PC-3 (cell line): ENCODE measurements at regions of chr3 and their contacts with region 1.

Region 1: DNA sequence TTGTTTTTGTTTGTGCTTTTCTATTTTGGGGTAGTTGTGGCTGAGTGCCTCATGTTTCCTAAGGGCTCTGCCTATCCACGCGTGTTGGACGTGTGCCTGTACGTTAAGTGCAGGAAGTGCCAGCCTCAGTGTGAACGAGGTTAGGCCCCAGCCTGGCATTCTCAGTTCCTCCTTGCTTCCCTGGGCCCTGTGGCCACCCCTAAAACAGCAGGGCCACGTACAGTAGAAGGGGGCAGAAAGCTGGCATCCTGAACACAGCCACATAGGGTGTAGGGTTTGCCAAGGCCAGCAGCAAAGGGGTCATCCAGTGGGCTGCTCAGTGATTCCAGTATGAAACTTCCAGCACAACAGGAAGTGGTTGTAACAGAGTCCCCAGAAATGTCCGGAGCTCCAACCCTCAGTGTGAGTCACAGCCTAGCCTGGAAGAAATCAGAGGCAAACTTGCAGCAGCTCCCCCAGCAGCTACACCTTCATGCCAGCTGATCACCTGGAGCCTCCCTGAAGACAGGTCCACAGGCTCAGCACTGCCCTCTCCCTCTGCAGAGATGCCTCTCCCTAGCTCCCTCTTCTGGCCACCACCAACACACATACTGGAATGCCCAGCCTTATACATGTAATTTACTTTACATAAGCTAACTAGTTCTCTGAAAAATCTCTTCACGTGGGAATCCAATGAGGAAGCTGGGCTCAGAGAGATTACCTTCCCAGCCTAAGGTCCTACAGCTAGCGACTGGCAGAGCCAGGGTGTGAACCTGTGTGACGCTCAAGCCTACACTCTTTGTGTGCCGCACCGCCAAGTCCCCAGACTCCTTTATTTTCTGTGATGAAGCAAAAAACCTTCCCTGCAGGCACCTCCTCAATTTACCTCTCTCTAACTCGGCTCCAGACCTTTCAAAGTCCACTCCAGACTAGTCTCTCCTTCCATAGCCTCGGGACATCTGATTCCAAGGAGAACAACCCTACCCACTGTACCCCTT is 26.6 kb downstream of the ILDR1 start:
- DNase-seq: peak; percentile 98
- ATAC-seq: peak; percentile 92
- H3K4me3 ChIP-seq: 0 out of 2 replicates have a peak overlapping the region, but pooled peaks have one; percentile 12
- H3K27ac ChIP-seq: peak overlapping the region; percentile 96
- H3K4me1 ChIP-seq: peaks cover 52% of the 10 kb centered on the region
- H3K27me3 ChIP-seq: no peaks in the 10 kb centered on the region
- CTCF ChIP-seq: peak; percentile 97

Region 2: GRCh38 chr3:121749276-121750086 is 246.0 kb before region 1 on chr3 and contains the start of gene GOLGB1:
- CTCF ChIA-PET with region 1: no interaction called
- POLR2A ChIA-PET with region 1: interaction called, 7 read pairs
- intact Hi-C with region 1: loop called (anchors 10 kb)
- DNase-seq: peak; percentile 100
- ATAC-seq: peak; percentile 94
- H3K4me3 ChIP-seq: peak within 1 kb of the TSS; percentile 86
- H3K27ac ChIP-seq: peak within 1 kb of the TSS; percentile 57
- H3K4me1 ChIP-seq: peaks cover 19% of the 10 kb centered on the region
- H3K27me3 ChIP-seq: no peaks in the 10 kb centered on the region
- CTCF ChIP-seq: no peak
- total RNA-seq, gene GOLGB1: 30.2 and 31.6 TPM in 2 replicates

Region 3: GRCh38 chr3:121834696-121835464 is 160.6 kb before region 1 on chr3 and contains the starts of genes EAF2 and IQCB1:
- CTCF ChIA-PET with region 1: no interaction called
- POLR2A ChIA-PET with region 1: no interaction called
- intact Hi-C with region 1: loop called (anchors 1 kb)
- DNase-seq: peak; percentile 99
- ATAC-seq: peak; percentile 99
- H3K4me3 ChIP-seq: peak within 1 kb of the TSS; percentile 81
- H3K27ac ChIP-seq: no peak within 1 kb of the TSS
- H3K4me1 ChIP-seq: peaks cover 16% of the 10 kb centered on the region
- H3K27me3 ChIP-seq: no peaks in the 10 kb centered on the region
- CTCF ChIP-seq: no peak
- total RNA-seq, gene EAF2: 2.8 and 8.6 TPM in 2 replicates
- total RNA-seq, gene IQCB1: 29.0 and 29.3 TPM in 2 replicates

Region 4: DNA sequence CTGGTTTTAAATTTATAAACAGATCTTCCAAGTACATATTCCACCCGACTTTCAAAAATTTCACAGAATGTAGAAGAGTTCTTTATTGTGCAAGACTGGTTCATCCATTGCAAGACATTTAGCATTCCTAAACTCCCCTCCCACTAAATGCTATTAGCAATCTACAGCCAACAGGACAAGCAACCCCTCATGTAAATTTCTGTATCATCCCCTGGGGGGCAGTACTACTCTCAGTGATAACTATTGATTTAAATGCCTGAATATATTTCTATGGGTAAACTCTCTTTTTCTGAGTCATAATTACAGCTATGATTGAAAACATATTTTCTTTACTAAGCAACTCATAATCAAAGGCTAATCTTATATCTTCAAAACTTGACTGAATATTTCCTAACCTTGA is 111.9 kb before region 1 on chr3:
- CTCF ChIA-PET with region 1: interaction called, 11 read pairs
- POLR2A ChIA-PET with region 1: no interaction called
- intact Hi-C with region 1: loop called (anchors 1 kb)
- DNase-seq: peak; percentile 89
- ATAC-seq: peak; percentile 82
- H3K4me3 ChIP-seq: no peak overlapping the region
- H3K27ac ChIP-seq: no peak overlapping the region
- H3K4me1 ChIP-seq: peaks cover 9% of the 10 kb centered on the region; the same call in 1 of the 2 replicates
- H3K27me3 ChIP-seq: no peaks in the 10 kb centered on the region
- CTCF ChIP-seq: peak; percentile 95

Region 5: DNA sequence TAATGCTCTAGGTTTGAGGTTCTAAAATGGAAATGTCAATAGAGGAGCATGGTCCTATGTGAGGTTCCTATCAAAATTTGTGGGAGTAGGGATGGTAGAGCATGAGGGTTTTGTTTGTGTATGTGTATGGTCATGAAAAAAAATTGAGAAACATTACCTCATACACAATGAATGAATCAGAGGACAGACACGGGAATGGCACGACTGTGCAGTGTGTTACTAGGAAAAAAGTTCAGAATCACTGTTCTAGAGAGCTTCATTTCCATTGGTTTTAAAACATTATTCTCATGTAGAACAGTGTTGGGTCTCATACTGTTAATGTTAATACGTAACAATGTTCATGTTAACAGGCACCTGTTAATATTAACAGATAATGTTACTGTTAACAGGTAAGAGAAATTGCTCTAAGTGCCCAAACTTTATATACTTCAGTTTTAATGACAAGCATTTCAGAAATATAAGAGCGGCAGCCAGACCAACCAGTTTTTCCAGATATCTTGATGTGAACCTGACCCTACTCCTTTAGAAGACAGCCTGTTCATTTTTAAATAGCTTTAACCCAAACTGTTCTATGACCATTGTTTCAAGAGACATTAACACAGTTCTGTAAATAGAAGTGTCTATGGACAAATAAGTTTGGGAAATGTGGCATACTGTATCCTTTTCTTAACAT is 53.2 kb before region 1 on chr3:
- CTCF ChIA-PET with region 1: interaction called, 6 read pairs
- POLR2A ChIA-PET with region 1: no interaction called
- intact Hi-C with region 1: loop called (anchors 2 kb)
- DNase-seq: peak; percentile 87
- ATAC-seq: peak; percentile 59
- H3K4me3 ChIP-seq: peak overlapping the region; percentile 26; the same call in 1 of the 2 replicates
- H3K27ac ChIP-seq: peak overlapping the region; percentile 27
- H3K4me1 ChIP-seq: peaks cover 38% of the 10 kb centered on the region
- H3K27me3 ChIP-seq: no peaks in the 10 kb centered on the region
- CTCF ChIP-seq: no peak

Region 6: DNA sequence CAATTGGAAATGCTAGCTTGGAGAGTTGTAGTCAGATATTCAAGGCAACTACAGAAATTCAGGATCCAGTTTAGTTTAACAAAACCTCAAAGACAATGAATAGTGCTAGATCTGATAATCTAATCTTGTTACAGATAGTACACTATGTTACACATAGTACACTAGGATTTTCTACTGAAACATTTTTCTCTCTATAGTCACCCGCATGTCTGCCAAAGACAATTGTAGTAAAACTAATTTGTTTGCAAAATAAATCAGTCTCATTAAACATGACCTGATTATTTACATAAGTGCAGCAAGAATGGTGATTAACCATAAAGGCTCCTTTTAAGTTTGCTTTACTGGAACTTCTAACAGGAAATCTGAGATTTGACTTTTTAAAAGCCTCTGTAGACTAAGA is 25.4 kb before region 1 on chr3:
- CTCF ChIA-PET with region 1: interaction called, 5 read pairs
- POLR2A ChIA-PET with region 1: no interaction called
- intact Hi-C with region 1: loop called (anchors 2 kb)
- DNase-seq: peak; percentile 97
- ATAC-seq: peak; percentile 89
- H3K4me3 ChIP-seq: peak overlapping the region; percentile 12; the same call in 1 of the 2 replicates
- H3K27ac ChIP-seq: peak overlapping the region; percentile 72
- H3K4me1 ChIP-seq: peaks cover 41% of the 10 kb centered on the region
- H3K27me3 ChIP-seq: no peaks in the 10 kb centered on the region
- CTCF ChIP-seq: no peak